Activated naive CD4-positive, alpha-beta T cell treated with anti-CD3 and anti-CD28 coated beads, Interleukin-2, amount 10 ng/mL, durations not matched to agents 7 days and 5 days (primary cell): ENCODE measurements at regions of chr11 and their contacts with region 1.

Region 1: GRCh38 chr11:124837491-124837856 is 27.8 kb upstream of the ROBO3 start:
- DNase-seq: no peak
- H3K4me3 Mint-ChIP-seq: no peak overlapping the region
- H3K27ac Mint-ChIP-seq: no peak overlapping the region
- H3K4me1 Mint-ChIP-seq: peaks cover 21% of the 10 kb centered on the region
- H3K27me3 Mint-ChIP-seq: peaks cover 86% of the 10 kb centered on the region

Region 2: DNA sequence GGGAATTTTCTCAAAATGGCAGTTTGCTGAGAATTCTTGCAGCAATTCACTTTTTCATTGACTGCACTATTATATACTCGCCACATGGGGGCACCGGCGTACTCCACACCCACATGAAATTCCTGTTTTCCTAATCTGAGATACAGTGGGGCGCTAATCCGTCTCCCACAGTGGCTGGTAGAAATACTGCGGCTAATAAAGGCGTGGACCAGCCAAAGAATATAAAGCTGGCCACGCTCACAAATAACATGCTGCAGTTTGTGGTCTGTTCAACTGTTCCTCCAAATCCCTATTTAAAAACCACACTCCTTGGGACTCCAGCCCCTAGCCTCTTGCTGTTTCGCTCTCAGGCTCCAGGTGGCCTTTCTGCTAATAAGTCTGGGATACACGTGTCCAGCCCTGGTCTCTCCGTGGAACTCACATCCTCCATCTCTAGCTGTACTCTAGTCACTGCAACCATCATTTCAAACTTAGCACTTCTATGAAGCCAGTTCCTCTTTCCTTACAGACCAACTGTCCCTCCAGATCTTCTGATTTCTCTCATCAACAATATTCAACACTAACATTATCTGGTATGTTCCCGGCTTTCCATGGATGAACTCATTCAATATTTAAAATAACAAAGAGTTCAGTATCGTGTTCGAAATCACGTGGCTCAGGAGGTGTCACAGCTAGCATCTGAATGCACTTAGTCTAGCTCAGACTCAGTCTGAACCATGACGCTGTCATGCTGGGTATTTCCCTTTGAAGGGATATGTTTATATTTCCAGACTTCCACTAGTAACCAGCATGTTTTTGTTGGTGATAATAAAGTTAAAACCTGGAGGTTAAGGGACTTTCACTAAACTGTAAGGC is 192.8 kb before region 1 on chr11:
- CTCF ChIA-PET with region 1: interaction called, 33 read pairs
- DNase-seq: peak; percentile 33
- H3K4me3 Mint-ChIP-seq: no peak overlapping the region
- H3K27ac Mint-ChIP-seq: no peak overlapping the region
- H3K4me1 Mint-ChIP-seq: no peaks in the 10 kb centered on the region
- H3K27me3 Mint-ChIP-seq: no peaks in the 10 kb centered on the region

Region 3: GRCh38 chr11:124717786-124718651 is 119.5 kb before region 1 on chr11:
- CTCF ChIA-PET with region 1: no interaction called
- DNase-seq: peak; percentile 22
- H3K4me3 Mint-ChIP-seq: peak overlapping the region; percentile 24
- H3K27ac Mint-ChIP-seq: no peak overlapping the region
- H3K4me1 Mint-ChIP-seq: peaks cover 17% of the 10 kb centered on the region
- H3K27me3 Mint-ChIP-seq: peaks cover 65% of the 10 kb centered on the region

Region 4: GRCh38 chr11:124800226-124800929 is 37.1 kb before region 1 on chr11 and contains the start of gene MSANTD2:
- CTCF ChIA-PET with region 1: interaction called, 10 read pairs
- DNase-seq: peak; percentile 86
- H3K4me3 Mint-ChIP-seq: peak within 1 kb of the TSS; percentile 94
- H3K27ac Mint-ChIP-seq: peak within 1 kb of the TSS; percentile 96
- H3K4me1 Mint-ChIP-seq: peaks cover 27% of the 10 kb centered on the region
- H3K27me3 Mint-ChIP-seq: peaks cover 9% of the 10 kb centered on the region

Region 5: DNA sequence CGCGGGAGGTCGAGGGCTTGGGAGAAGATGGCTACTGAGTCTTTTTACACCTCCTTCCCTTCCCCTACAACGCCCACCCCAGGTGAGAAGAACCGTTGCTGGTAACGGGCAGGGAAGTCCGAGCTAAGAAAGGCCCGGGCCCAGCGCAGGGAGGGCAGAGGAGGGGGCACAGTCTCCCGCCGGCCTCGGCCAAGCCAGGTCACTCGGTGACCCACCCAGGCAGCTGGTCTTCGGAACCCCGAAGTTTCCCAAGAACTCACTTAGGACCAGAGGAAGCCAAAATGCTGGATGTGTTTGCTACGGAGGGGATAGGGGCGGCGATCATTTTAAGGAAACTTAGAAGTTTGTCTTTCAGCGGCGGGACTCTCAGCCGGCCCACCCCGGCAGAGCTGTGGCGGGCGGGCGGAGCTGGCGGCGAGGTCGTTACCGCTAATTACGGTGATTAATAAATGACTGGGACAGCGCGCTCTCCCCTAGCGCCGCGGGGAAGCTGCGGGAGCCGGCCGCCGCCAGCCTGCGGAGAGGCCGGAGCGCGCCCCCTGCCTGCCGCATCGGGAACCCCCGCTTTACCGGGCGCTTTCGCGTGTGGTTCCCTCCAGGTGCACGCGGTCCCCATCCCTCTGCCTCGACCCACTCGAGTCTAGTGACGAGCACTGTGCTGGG is 28.6 kb after region 1 on chr11:
- CTCF ChIA-PET with region 1: interaction called, 26 read pairs
- DNase-seq: peak; percentile 62
- H3K4me3 Mint-ChIP-seq: no peak overlapping the region
- H3K27ac Mint-ChIP-seq: no peak overlapping the region
- H3K4me1 Mint-ChIP-seq: peaks cover 37% of the 10 kb centered on the region
- H3K27me3 Mint-ChIP-seq: peaks cover 100% of the 10 kb centered on the region

Region 6: GRCh38 chr11:124875943-124876817 is 38.7 kb after region 1 on chr11:
- CTCF ChIA-PET with region 1: interaction called, 12 read pairs
- DNase-seq: peak; percentile 86
- H3K4me3 Mint-ChIP-seq: peak overlapping the region; percentile 79
- H3K27ac Mint-ChIP-seq: peak overlapping the region; percentile 85
- H3K4me1 Mint-ChIP-seq: peaks cover 29% of the 10 kb centered on the region
- H3K27me3 Mint-ChIP-seq: peaks cover 77% of the 10 kb centered on the region